OCI-LY7 (cell line): ENCODE measurements at regions of chr13 and their contacts with region 1.

Region 1: GRCh38 chr13:43720780-43721397 is 65.9 kb downstream of the ENOX1 start:
- DNase-seq: no peak
- H3K4me3 ChIP-seq: no peak overlapping the region
- H3K27ac ChIP-seq: no peak overlapping the region
- H3K4me1 ChIP-seq: no peaks in the 10 kb centered on the region
- CTCF ChIP-seq: no peak

Region 2: DNA sequence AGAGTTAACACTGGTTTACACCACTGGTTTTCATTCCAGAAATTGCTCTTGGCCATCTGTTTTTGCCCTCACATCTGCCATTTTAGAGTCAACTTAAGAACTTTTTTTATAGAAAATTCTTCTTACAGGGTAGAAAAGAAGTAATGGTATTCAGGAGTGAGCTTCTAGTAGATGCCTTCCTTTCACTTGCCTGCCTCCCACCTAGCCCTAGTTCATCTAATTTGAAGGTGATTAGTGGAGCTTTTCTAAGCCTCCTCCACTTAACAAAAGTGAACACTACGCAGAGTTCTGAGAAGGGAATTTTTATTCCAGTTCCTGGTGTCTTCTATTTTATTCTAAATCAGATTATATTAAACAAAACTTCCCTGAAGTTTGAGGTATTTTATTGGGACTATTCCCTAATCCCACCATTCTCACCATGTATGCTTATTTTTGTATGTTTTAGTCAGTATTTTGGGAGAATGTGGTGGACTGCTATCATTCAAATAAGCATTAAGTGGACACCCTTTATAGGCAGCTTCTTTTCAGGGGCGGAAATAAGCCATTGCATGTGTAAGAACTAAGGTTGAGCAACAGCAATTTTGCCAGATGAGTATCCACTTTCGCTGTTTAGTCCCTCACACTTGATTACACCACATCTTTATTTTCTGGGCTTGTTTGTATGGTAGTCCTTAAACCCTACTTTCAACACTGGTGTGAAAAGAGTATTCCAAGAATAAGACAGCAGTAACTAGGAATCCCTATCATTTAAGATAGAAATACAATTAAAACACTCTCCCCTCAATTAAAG is 91.0 kb before region 1 on chr13:
- CTCF ChIA-PET with region 1: interaction called, 13 read pairs
- POLR2A ChIA-PET with region 1: interaction called, 3 read pairs
- intact Hi-C with region 1: no loop called
- DNase-seq: no peak
- H3K4me3 ChIP-seq: no peak overlapping the region
- H3K27ac ChIP-seq: no peak overlapping the region
- H3K4me1 ChIP-seq: no peaks in the 10 kb centered on the region
- CTCF ChIP-seq: no peak

Region 3: DNA sequence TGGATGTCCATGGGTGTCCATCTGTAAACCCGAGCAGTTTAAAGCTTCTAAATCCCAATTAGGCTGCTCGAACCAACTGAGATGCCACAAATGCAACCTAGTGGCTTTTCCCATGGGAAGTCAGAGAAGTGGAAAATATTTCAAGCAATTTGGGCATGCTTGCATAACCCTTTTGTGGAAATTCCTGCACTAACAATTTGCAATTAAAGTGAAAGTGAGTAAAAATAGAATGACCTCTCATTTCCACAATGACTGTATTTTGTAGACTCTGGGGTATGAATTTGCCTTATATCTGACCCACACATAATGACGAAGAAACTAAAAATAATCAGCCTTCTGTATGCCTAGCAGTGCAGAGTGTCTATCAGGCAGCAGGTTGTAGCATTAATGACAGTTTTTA is 947.1 kb after region 1 on chr13:
- CTCF ChIA-PET with region 1: no interaction called
- POLR2A ChIA-PET with region 1: no interaction called
- intact Hi-C with region 1: no loop called
- DNase-seq: no peak
- H3K4me3 ChIP-seq: no peak overlapping the region
- H3K27ac ChIP-seq: no peak overlapping the region
- H3K4me1 ChIP-seq: no peaks in the 10 kb centered on the region
- CTCF ChIP-seq: no peak

Region 4: DNA sequence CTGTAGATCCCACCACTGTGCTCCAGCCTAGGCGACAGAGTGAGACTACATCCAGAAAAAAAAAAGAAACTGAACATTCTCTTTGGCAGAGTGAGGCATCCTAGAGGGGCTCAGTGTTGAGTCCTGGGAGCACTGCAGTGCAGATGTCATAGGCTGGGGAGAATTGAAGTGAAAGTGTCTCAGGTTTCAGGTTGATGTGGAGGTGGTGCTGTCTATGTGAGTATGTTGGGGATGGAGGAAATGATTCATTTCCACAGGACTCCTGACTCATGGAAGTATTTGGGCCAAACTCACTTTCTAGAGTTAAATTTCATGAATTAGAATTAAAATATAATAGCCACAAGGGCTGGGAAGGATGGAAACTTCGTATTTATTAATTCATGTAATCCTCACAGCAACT is 989.7 kb after region 1 on chr13:
- CTCF ChIA-PET with region 1: no interaction called
- POLR2A ChIA-PET with region 1: no interaction called
- intact Hi-C with region 1: no loop called
- DNase-seq: no peak
- H3K4me3 ChIP-seq: no peak overlapping the region
- H3K27ac ChIP-seq: no peak overlapping the region
- H3K4me1 ChIP-seq: no peaks in the 10 kb centered on the region
- CTCF ChIP-seq: no peak